Caco-2 (cell line): ENCODE measurements at regions of chr3 and their contacts with region 1.

Region 1: GRCh38 chr3:24451461-24452099 is 43.1 kb downstream of the THRB start:
- DNase-seq: peak; percentile 90 to 92
- H3K4me3 ChIP-seq: 0 out of 2 replicates have a peak overlapping the region, but pooled peaks have one; percentile 4
- H3K4me3 Mint-ChIP-seq: peak overlapping the region; percentile 74
- H3K27ac Mint-ChIP-seq: peak overlapping the region; percentile 93
- H3K4me1 ChIP-seq: peaks cover 83% of the 10 kb centered on the region
- H3K4me1 Mint-ChIP-seq: peaks cover 38% of the 10 kb centered on the region
- H3K27me3 ChIP-seq: no peaks in the 10 kb centered on the region
- H3K27me3 Mint-ChIP-seq: no peaks in the 10 kb centered on the region
- CTCF ChIP-seq: no peak

Region 2: DNA sequence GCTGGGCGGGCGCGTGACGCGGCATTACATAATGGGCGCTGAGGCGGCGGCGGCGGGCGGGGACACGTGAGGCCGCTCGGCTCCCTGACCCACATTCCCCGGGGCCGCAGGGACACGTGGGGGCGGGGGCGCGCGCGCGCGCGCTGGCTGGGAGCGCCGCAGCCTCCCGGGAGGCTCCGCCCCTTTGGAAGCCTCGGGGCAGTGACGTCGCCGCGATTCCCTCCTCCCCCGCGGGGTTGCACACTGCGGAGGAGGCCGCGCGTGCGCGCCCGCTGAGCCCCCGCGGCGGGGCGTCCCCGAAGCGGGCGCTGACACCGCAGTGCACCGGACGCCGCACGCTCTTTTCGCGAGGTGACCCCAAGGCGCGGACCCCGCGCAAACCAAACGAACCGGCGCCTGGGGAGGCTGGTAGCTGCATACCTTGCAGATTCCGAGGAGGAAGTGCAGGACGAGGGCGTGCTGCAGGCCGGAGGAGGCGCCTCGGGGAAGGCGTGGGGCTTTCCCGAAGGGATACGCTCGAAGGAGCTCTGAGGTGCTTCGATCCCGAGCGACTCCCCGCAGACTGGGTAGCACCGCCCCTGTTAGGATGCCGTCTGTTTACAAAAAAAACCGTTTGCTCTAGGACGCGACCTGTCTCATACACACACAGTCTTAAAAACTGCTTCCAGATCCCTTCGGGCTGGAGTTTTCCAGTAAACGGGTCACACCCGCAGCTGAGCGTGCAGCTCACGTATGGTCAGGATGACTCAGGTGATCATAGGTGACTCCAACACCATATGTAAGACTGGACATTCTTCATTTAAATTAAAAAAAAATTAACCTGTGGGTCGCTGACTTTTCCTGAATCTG is 505.5 kb before region 1 on chr3:
- CTCF ChIA-PET with region 1: no interaction called
- POLR2A ChIA-PET with region 1: no interaction called
- intact Hi-C with region 1: loop called (anchors 10 kb)
- DNase-seq: peak; percentile 96 to 98
- H3K4me3 ChIP-seq: peak overlapping the region; percentile 94
- H3K4me3 Mint-ChIP-seq: peak overlapping the region; percentile 94
- H3K27ac Mint-ChIP-seq: peak overlapping the region; percentile 95
- H3K4me1 ChIP-seq: peaks cover 27% of the 10 kb centered on the region
- H3K4me1 Mint-ChIP-seq: peaks cover 21% of the 10 kb centered on the region
- H3K27me3 ChIP-seq: no peaks in the 10 kb centered on the region
- H3K27me3 Mint-ChIP-seq: no peaks in the 10 kb centered on the region
- CTCF ChIP-seq: no peak

Region 3: DNA sequence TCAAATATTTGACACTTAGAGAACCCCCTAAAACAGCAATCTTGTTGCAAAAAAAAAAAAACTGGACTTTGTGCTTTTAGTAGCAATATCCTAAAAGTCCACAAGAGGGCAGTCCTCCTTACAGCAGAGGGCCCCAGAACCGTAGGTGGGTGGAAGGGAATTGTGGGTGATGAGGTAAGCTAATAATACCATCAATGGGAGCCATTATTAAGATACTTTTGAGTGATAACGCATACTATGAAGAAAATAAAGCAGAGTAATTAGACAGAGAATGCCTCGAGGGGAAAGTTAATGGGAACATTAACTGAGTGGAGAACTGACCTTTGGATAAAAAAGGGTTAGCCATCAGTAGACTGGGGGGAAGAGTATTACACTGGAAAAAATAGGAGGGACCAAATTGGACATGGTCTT is 186.8 kb before region 1 on chr3:
- CTCF ChIA-PET with region 1: no interaction called
- POLR2A ChIA-PET with region 1: no interaction called
- intact Hi-C with region 1: loop called (anchors 1 kb)
- DNase-seq: peak in 1 of 2 experiments; percentile 53
- H3K4me3 ChIP-seq: no peak overlapping the region
- H3K4me3 Mint-ChIP-seq: no peak overlapping the region
- H3K27ac Mint-ChIP-seq: no peak overlapping the region
- H3K4me1 ChIP-seq: no peaks in the 10 kb centered on the region
- H3K4me1 Mint-ChIP-seq: peaks cover 6% of the 10 kb centered on the region
- H3K27me3 ChIP-seq: no peaks in the 10 kb centered on the region
- H3K27me3 Mint-ChIP-seq: no peaks in the 10 kb centered on the region
- CTCF ChIP-seq: peak; percentile 67 to 76

Region 4: GRCh38 chr3:24316811-24317383 is 134.7 kb before region 1 on chr3:
- CTCF ChIA-PET with region 1: no interaction called
- POLR2A ChIA-PET with region 1: no interaction called
- intact Hi-C with region 1: loop called (anchors 2 kb)
- DNase-seq: peak; percentile 53 to 64
- H3K4me3 ChIP-seq: no peak overlapping the region
- H3K4me3 Mint-ChIP-seq: peak overlapping the region; percentile 57
- H3K27ac Mint-ChIP-seq: peak overlapping the region; percentile 82
- H3K4me1 ChIP-seq: peaks cover 40% of the 10 kb centered on the region
- H3K4me1 Mint-ChIP-seq: peaks cover 22% of the 10 kb centered on the region
- H3K27me3 ChIP-seq: no peaks in the 10 kb centered on the region
- H3K27me3 Mint-ChIP-seq: no peaks in the 10 kb centered on the region
- CTCF ChIP-seq: no peak

Region 5: GRCh38 chr3:24365194-24365612 is 86.4 kb before region 1 on chr3:
- CTCF ChIA-PET with region 1: no interaction called
- POLR2A ChIA-PET with region 1: no interaction called
- intact Hi-C with region 1: loop called (anchors 1 kb)
- DNase-seq: peak; percentile 15 to 44
- H3K4me3 ChIP-seq: no peak overlapping the region
- H3K4me3 Mint-ChIP-seq: no peak overlapping the region
- H3K27ac Mint-ChIP-seq: no peak overlapping the region
- H3K4me1 ChIP-seq: peaks cover 48% of the 10 kb centered on the region
- H3K4me1 Mint-ChIP-seq: peaks cover 20% of the 10 kb centered on the region
- H3K27me3 ChIP-seq: no peaks in the 10 kb centered on the region
- H3K27me3 Mint-ChIP-seq: no peaks in the 10 kb centered on the region
- CTCF ChIP-seq: no peak

Region 6: DNA sequence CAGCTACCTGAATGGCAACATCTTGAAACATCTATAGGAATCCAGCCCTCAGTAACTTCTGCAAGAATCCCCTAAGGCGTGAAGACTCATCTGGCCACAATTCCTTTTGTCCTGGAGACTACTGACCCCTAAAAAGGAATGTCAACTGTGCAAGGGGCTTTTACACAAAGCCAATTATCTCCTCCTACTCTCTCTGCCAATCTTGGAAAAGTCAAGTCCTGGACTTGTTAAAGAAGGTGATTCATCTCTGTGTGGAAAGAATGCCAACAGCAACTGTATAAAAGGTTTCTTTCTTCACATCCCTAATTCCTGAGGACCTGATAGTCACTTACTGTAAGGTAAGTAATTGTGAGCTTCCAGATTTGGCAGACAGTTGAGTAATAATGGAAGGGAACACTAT is 20.8 kb after region 1 on chr3:
- CTCF ChIA-PET with region 1: no interaction called
- POLR2A ChIA-PET with region 1: no interaction called
- intact Hi-C with region 1: loop called (anchors 2 kb)
- DNase-seq: no peak
- H3K4me3 ChIP-seq: no peak overlapping the region
- H3K4me3 Mint-ChIP-seq: no peak overlapping the region
- H3K27ac Mint-ChIP-seq: no peak overlapping the region
- H3K4me1 ChIP-seq: peaks cover 7% of the 10 kb centered on the region; the same call in 1 of the 2 replicates
- H3K4me1 Mint-ChIP-seq: no peaks in the 10 kb centered on the region
- H3K27me3 ChIP-seq: no peaks in the 10 kb centered on the region
- H3K27me3 Mint-ChIP-seq: no peaks in the 10 kb centered on the region
- CTCF ChIP-seq: no peak

Region 7: GRCh38 chr3:24591661-24592522 is 140.3 kb after region 1 on chr3:
- CTCF ChIA-PET with region 1: no interaction called
- POLR2A ChIA-PET with region 1: no interaction called
- intact Hi-C with region 1: loop called (anchors 2 kb)
- DNase-seq: peak; percentile 51 to 54
- H3K4me3 ChIP-seq: no peak overlapping the region
- H3K4me3 Mint-ChIP-seq: peak overlapping the region; percentile 39
- H3K27ac Mint-ChIP-seq: peak overlapping the region; percentile 33
- H3K4me1 ChIP-seq: peaks cover 41% of the 10 kb centered on the region
- H3K4me1 Mint-ChIP-seq: peaks cover 61% of the 10 kb centered on the region
- H3K27me3 ChIP-seq: no peaks in the 10 kb centered on the region
- H3K27me3 Mint-ChIP-seq: no peaks in the 10 kb centered on the region
- CTCF ChIP-seq: no peak

Region 8: GRCh38 chr3:25386686-25387255 is 935.2 kb after region 1 on chr3:
- CTCF ChIA-PET with region 1: no interaction called
- POLR2A ChIA-PET with region 1: no interaction called
- intact Hi-C with region 1: no loop called
- DNase-seq: no peak
- H3K4me3 ChIP-seq: no peak overlapping the region
- H3K4me3 Mint-ChIP-seq: no peak overlapping the region
- H3K27ac Mint-ChIP-seq: no peak overlapping the region
- H3K4me1 ChIP-seq: no peaks in the 10 kb centered on the region
- H3K4me1 Mint-ChIP-seq: no peaks in the 10 kb centered on the region
- H3K27me3 ChIP-seq: no peaks in the 10 kb centered on the region
- H3K27me3 Mint-ChIP-seq: no peaks in the 10 kb centered on the region
- CTCF ChIP-seq: no peak